ENCODE measurements at regions of chr6 and their contacts with region 1.

Region 1: GRCh38 chr6:30914076-30914853 is at the start of gene VARS2:
- DNase-seq: peak; percentile 72
- ATAC-seq: peak; percentile 96
- H3K4me3 ChIP-seq: peak within 1 kb of the TSS; percentile 91
- H3K27ac ChIP-seq: peak within 1 kb of the TSS; percentile 87
- H3K4me1 ChIP-seq: peaks cover 4% of the 10 kb centered on the region
- H3K27me3 ChIP-seq: no peaks in the 10 kb centered on the region
- CTCF ChIP-seq: peak; percentile 40 to 56 (median 49); a peak in 4 of 6 replicates
- EP300 ChIP-seq: no peak
- POLR2A ChIP-seq: peak; percentile 87
- RAD21 ChIP-seq: peak; percentile 59
- polyA plus RNA-seq, gene VARS2: 3.8 to 4.3 TPM

Region 2: GRCh38 chr6:30625457-30625856 is 288.8 kb before region 1 on chr6:
- CTCF ChIA-PET with region 1: no interaction called
- POLR2A ChIA-PET with region 1: no interaction called
- RAD21 ChIA-PET with region 1: no interaction called
- SMC1A ChIA-PET with region 1: no interaction called
- in situ Hi-C with region 1: no loop called
- intact Hi-C with region 1: no loop called
- DNase-seq: no peak
- ATAC-seq: no peak
- H3K4me3 ChIP-seq: no peak overlapping the region
- H3K27ac ChIP-seq: no peak overlapping the region
- H3K4me1 ChIP-seq: no peaks in the 10 kb centered on the region
- H3K27me3 ChIP-seq: no peaks in the 10 kb centered on the region
- CTCF ChIP-seq: no peak
- EP300 ChIP-seq: no peak
- POLR2A ChIP-seq: no peak
- RAD21 ChIP-seq: no peak

Region 3: GRCh38 chr6:30707281-30707872 is 206.9 kb before region 1 on chr6:
- CTCF ChIA-PET with region 1: no interaction called
- POLR2A ChIA-PET with region 1: no interaction called
- RAD21 ChIA-PET with region 1: no interaction called
- SMC1A ChIA-PET with region 1: no interaction called
- in situ Hi-C with region 1: no loop called
- intact Hi-C with region 1: no loop called
- DNase-seq: no peak
- ATAC-seq: no peak
- H3K4me3 ChIP-seq: no peak overlapping the region
- H3K27ac ChIP-seq: no peak overlapping the region
- H3K4me1 ChIP-seq: peaks cover 18% of the 10 kb centered on the region
- H3K27me3 ChIP-seq: no peaks in the 10 kb centered on the region
- CTCF ChIP-seq: no peak
- EP300 ChIP-seq: no peak
- POLR2A ChIP-seq: no peak
- RAD21 ChIP-seq: no peak

Region 4: DNA sequence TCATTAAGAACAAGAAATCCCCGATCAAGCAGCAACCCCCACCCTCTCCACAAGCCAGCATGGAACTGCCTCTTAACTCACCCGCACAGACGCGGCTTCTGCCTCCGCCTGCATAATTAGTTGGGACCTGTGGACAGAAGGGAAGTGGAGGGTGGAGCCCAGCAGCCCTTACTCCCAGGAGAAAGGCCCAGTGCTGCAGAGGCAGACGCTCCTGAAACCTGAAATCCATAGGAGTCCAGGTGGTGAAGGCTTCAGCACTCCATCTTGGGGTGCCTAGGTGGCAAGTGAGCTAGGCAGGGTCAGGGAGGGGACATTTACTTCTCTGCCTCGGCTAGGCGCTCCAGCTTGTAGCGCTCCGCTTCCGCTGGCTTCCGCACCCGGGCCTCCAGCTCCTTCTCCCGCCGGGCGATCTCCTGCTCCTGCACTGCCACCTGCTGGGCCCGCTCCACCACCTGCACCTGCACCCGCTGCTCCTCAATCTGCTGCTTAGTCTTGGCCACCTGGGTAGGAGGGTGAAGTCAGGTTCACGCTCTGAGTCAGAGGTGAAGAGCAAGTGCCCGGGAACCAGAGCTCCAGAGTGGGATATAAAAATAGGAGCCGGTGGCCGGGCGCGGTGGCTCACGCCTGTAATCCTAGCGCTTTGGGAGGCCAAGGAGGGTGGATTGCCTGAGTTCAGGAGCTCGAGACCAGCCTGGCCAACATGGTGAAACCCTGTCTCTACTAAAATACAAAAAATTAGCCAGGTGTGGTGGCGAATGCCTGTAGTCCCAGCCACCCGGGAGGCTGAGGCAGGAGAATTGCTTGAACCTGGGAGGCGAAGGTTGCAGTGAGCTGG is 183.4 kb before region 1 on chr6:
- CTCF ChIA-PET with region 1: interaction called, 14 read pairs
- POLR2A ChIA-PET with region 1: interaction called, 3 read pairs
- RAD21 ChIA-PET with region 1: interaction called, 8 read pairs
- SMC1A ChIA-PET with region 1: interaction called, 4 read pairs
- in situ Hi-C with region 1: no loop called
- intact Hi-C with region 1: no loop called
- DNase-seq: no peak
- ATAC-seq: peak; percentile 87
- H3K4me3 ChIP-seq: no peak overlapping the region
- H3K27ac ChIP-seq: peak overlapping the region; percentile 32; the same call in 1 of the 2 replicates
- H3K4me1 ChIP-seq: peaks cover 13% of the 10 kb centered on the region
- H3K27me3 ChIP-seq: no peaks in the 10 kb centered on the region
- CTCF ChIP-seq: peak; percentile 83 to 96 (median 90)
- EP300 ChIP-seq: no peak
- POLR2A ChIP-seq: peak; percentile 42; the same call in 1 of the 2 replicates
- RAD21 ChIP-seq: peak; percentile 83

Region 5: GRCh38 chr6:30828027-30828960 is 86.0 kb before region 1 on chr6:
- CTCF ChIA-PET with region 1: interaction called, 122 read pairs
- POLR2A ChIA-PET with region 1: interaction called, 19 read pairs
- RAD21 ChIA-PET with region 1: interaction called, 90 read pairs
- SMC1A ChIA-PET with region 1: interaction called, 141 read pairs
- in situ Hi-C with region 1: no loop called
- intact Hi-C with region 1: loop called (anchors 1 kb)
- DNase-seq: no peak
- ATAC-seq: peak; percentile 94
- H3K4me3 ChIP-seq: no peak overlapping the region
- H3K27ac ChIP-seq: no peak overlapping the region
- H3K4me1 ChIP-seq: peaks cover 16% of the 10 kb centered on the region
- H3K27me3 ChIP-seq: no peaks in the 10 kb centered on the region
- CTCF ChIP-seq: peak; percentile 88 to 97 (median 90); a peak in 5 of 6 replicates
- EP300 ChIP-seq: no peak
- POLR2A ChIP-seq: no peak
- RAD21 ChIP-seq: peak; percentile 99

Region 6: GRCh38 chr6:30883685-30884520 is 30.4 kb before region 1 on chr6 and contains the start of gene DDR1:
- CTCF ChIA-PET with region 1: interaction called, 71 read pairs
- POLR2A ChIA-PET with region 1: interaction called, 50 read pairs
- RAD21 ChIA-PET with region 1: interaction called, 138 read pairs
- SMC1A ChIA-PET with region 1: interaction called, 40 read pairs
- in situ Hi-C with region 1: no loop called
- intact Hi-C with region 1: loop called (anchors 2 kb)
- DNase-seq: no peak
- ATAC-seq: peak; percentile 65
- H3K4me3 ChIP-seq: peak within 1 kb of the TSS; percentile 75
- H3K27ac ChIP-seq: peak within 1 kb of the TSS; percentile 81
- H3K4me1 ChIP-seq: peaks cover 38% of the 10 kb centered on the region
- H3K27me3 ChIP-seq: no peaks in the 10 kb centered on the region
- CTCF ChIP-seq: no peak
- EP300 ChIP-seq: no peak
- POLR2A ChIP-seq: peak; percentile 18; the same call in 1 of the 2 replicates
- RAD21 ChIP-seq: no peak
- polyA plus RNA-seq, gene DDR1: 1.1 to 2.2 TPM

Region 7: DNA sequence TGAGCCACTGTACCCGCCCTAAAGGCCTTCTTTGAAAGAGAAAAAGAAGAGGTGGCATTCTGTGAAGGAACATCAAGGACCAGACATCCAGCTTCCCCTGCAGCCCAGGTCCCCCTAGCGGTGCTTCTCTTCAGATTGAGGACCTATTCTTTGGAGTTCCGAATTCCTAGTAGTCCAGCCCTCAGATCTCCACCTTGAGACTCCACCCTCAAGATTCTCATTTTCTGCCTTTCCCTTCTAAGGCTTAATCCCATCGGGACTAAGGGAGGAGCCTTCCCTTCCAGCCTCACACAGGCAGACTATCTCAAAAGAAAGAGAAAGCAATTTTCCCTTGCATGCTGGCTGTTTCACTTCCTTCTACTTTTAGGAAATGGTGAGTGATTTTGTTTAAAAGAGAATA is 128.5 kb after region 1 on chr6:
- CTCF ChIA-PET with region 1: interaction called, 55 read pairs
- POLR2A ChIA-PET with region 1: no interaction called
- RAD21 ChIA-PET with region 1: interaction called, 15 read pairs
- SMC1A ChIA-PET with region 1: interaction called, 8 read pairs
- in situ Hi-C with region 1: no loop called
- intact Hi-C with region 1: loop called (anchors 2 kb)
- DNase-seq: no peak
- ATAC-seq: peak; percentile 69
- H3K4me3 ChIP-seq: peak overlapping the region; percentile 40; the same call in 1 of the 2 replicates
- H3K27ac ChIP-seq: no peak overlapping the region
- H3K4me1 ChIP-seq: no peaks in the 10 kb centered on the region
- H3K27me3 ChIP-seq: peaks cover 0 to 2% of the 10 kb centered on the region in 2 experiments; a peak in 2 of 4 replicates
- CTCF ChIP-seq: peak; percentile 57 to 70 (median 57); a peak in 5 of 6 replicates
- EP300 ChIP-seq: no peak
- POLR2A ChIP-seq: no peak
- RAD21 ChIP-seq: peak; percentile 74

Region 8: DNA sequence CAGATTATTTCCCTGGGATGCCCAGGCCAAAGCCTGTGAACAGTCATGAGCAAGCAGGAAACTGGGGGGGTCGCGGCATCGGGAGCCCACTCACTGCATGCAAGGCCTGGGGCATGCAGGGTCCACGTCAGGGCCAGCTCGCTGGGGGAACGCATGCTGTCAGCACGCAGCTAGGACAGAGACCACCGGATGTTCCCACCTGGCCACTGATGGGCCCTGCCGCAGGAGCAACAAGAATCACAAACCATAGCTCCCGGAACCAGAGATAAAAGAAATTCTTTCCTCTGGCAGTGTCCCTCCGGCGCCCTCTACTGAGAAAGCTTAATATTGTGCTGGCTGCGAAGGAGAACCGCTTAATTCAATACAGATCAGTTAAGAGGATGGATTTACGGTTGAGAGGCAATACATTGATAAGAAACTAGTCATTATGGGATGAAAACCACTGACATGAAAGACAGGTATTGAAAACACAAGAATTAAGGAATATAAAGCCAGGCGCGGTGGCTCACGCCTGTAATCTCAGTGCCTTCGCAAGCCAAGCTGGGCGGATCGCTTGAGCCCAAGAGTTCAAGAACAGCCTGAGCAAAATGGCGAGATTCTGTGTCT is 165.5 kb after region 1 on chr6:
- CTCF ChIA-PET with region 1: interaction called, 119 read pairs
- POLR2A ChIA-PET with region 1: no interaction called
- RAD21 ChIA-PET with region 1: interaction called, 20 read pairs
- SMC1A ChIA-PET with region 1: interaction called, 32 read pairs
- in situ Hi-C with region 1: loop called (anchors 5 kb)
- intact Hi-C with region 1: loop called (anchors 5 kb)
- DNase-seq: no peak
- ATAC-seq: peak; percentile 87
- H3K4me3 ChIP-seq: no peak overlapping the region
- H3K27ac ChIP-seq: no peak overlapping the region
- H3K4me1 ChIP-seq: no peaks in the 10 kb centered on the region
- H3K27me3 ChIP-seq: no peaks in the 10 kb centered on the region
- CTCF ChIP-seq: peak; percentile 74 to 85 (median 79)
- EP300 ChIP-seq: no peak
- POLR2A ChIP-seq: no peak
- RAD21 ChIP-seq: peak; percentile 85